Activated T-helper 1 cell treated with anti-CD3 and anti-CD28 coated beads, Interleukin-12 subunit alpha, Interleukin-12 subunit beta, Interleukin-2, Interleukin-4 antibody, amounts not matched to agents 30 ng/mL and 10 ng/mL and 1 ng/mL, durations not matched to agents 14 hours and 24 hours and 36 hours (primary cell): ENCODE measurements at regions of chr2 and their contacts with region 1.

Region 1: GRCh38 chr2:45643543-45644542 is 7.6 kb upstream of the PRKCE start:
- DNase-seq: peak; percentile 67
- H3K4me3 Mint-ChIP-seq: peak overlapping the region; percentile 70
- H3K27ac Mint-ChIP-seq: no peak overlapping the region
- H3K4me1 Mint-ChIP-seq: peaks cover 10% of the 10 kb centered on the region
- H3K27me3 Mint-ChIP-seq: peaks cover 32% of the 10 kb centered on the region

Region 2: GRCh38 chr2:45748239-45748638 is 104.4 kb after region 1 on chr2:
- intact Hi-C with region 1: no loop called
- DNase-seq: no peak
- H3K4me3 Mint-ChIP-seq: no peak overlapping the region
- H3K27ac Mint-ChIP-seq: no peak overlapping the region
- H3K4me1 Mint-ChIP-seq: peaks cover 10% of the 10 kb centered on the region
- H3K27me3 Mint-ChIP-seq: no peaks in the 10 kb centered on the region

Region 3: DNA sequence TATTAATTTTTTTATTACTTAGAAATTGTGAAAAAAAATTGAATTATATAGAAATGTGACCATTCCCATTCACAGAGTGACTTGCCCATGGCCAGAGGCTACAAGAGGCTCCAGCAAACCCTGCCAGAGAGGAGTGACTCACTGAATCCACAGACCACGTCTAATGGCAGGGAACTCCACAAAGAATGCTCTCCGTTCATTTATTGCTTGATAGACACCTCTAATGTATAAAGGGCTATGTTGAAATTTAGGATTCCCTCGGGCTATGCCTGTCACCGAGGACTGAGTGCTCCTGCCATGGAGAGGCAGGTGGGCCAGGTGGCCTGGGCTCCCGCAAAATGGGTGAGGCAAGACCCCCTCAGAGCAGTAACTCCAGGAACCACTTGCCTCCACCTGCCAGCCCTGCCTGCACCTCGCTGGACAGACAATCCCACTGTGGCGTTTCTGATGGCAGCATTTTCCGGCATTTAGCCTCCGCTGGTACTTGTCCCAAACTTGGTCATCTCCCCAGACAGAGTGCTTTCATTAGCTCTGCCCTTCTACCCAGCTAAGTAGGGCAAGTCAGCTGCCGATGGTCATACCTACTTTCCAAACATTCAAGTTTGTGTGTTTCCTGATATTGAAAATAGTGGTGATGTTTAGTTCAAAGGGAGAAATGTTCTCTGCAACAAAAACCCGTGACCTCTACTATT is 207.9 kb after region 1 on chr2:
- intact Hi-C with region 1: loop called (anchors 5 kb)
- DNase-seq: no peak
- H3K4me3 Mint-ChIP-seq: no peak overlapping the region
- H3K27ac Mint-ChIP-seq: no peak overlapping the region
- H3K4me1 Mint-ChIP-seq: peaks cover 33% of the 10 kb centered on the region
- H3K27me3 Mint-ChIP-seq: peaks cover 1% of the 10 kb centered on the region

Region 4: DNA sequence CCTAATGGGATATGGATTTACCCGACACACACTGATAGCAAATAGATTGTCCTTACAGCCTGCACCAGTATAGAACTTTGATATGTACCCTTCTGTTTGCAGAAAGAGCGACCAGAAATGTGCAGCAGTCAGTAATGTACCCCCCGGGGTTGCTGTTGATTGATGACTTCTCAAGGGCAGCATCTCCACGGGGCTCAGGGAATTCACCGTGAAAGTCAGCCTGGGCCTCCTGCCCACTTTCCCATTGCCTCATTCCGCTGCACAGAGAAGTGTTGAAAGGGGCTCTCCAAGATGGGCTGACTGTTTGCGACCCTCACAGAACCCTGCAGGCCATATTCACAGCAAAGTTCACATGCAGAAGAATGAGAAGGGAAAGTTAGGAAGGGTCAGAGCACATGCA is 248.9 kb after region 1 on chr2:
- intact Hi-C with region 1: no loop called
- DNase-seq: no peak
- H3K4me3 Mint-ChIP-seq: no peak overlapping the region
- H3K27ac Mint-ChIP-seq: no peak overlapping the region
- H3K4me1 Mint-ChIP-seq: peaks cover 23% of the 10 kb centered on the region
- H3K27me3 Mint-ChIP-seq: no peaks in the 10 kb centered on the region

Region 5: DNA sequence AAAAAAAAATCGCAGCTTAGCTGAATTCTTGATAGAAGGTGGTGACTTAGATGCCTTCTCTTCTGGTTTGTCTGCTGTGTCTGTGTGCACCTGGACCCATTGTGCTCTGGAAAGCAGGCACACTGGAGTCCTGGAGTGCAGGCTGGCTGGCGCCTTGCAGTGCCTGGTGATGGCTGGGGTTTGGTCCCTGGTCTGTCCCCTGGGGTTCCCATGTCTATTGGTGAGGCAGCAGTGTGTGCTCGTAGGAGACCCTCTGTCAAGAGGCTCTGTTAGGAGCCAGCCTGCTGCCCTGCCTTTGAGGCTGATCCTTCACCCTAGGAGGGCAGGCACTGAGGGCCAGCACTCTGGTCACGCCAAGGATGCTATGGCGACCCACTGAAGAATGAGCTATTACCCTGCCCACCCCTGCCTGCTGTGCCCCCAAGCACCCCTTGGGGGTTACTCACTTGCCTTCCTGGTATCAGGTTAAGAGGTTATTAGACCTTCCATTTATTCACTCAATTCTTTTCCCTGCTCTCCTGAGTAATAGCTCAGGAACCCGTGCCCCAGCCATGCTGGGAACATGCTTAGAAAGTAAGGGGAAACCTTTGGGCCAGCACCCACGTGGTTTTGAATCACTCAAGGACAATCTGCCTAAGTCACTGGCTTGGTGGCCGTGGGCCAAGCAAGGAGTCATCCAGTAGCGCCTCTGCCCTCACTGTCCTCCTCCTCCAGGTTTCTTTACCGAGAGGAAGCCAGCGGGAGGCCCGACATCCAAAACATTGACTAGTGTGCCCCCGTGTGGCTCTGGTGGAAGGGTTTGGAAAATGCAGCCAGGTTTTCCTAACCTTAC is 292.2 kb after region 1 on chr2:
- intact Hi-C with region 1: loop called (anchors 1 kb)
- DNase-seq: peak; percentile 34
- H3K4me3 Mint-ChIP-seq: no peak overlapping the region
- H3K27ac Mint-ChIP-seq: no peak overlapping the region
- H3K4me1 Mint-ChIP-seq: peaks cover 4% of the 10 kb centered on the region
- H3K27me3 Mint-ChIP-seq: no peaks in the 10 kb centered on the region